CD4-positive, alpha-beta memory T cell (primary cell): ENCODE measurements at regions of chr6 and their contacts with region 1.

Region 1: DNA sequence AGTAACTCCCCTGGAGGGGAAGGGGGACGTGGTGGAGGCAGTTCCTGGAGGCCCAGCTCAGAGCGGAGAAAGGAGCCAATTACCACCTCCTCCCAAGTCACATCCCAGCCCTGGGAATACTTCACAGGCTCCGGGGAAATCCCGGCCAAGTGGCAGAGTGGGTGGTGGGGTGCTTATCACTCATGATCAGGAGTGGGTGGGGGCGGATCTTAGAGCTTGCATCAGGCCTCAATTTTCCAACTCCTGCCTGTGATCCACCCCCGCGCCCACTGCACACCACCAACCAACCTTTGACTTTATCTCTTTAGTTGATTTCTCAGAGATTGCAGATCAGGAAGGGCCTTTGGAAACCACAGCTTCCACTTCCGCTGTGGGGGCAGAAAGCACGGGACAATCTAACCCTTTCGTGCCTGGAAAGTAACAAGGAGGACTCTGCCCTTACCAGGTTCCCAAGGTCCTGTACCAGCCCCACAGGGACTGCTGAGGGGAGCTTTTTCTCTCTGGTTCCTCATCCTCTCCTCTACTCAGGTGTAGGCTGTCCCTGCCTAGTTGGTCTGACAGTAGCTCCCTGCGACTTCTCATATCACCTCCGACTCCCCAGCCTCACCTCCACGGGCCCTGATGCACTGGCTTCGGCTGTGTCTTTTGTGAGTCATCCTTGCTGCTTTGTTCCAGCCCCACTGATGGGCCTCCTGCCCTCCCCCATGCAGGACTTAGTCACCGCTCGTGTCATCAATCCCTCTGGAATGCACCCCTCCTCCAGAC is 24.9 kb upstream of the IER3 start:
- DNase-seq: peak; percentile 41 to 78 (median 49)
- H3K4me3 ChIP-seq: peak overlapping the region in 1 of 2 donors; percentile 28
- H3K4me3 Mint-ChIP-seq: peak overlapping the region; percentile 61 to 83 (median 72)
- H3K27ac ChIP-seq: peak overlapping the region; percentile 18
- H3K27ac Mint-ChIP-seq: peak overlapping the region; percentile 23 to 92 (median 88)
- H3K4me1 ChIP-seq: peaks cover 40% of the 10 kb centered on the region
- H3K4me1 Mint-ChIP-seq: peaks cover 36 to 67% (median 52%) of the 10 kb centered on the region in 4 donors
- H3K27me3 ChIP-seq: no peaks in the 10 kb centered on the region
- H3K27me3 Mint-ChIP-seq: no peaks in the 10 kb centered on the region

Region 2: GRCh38 chr6:30787954-30788353 is 18.7 kb after region 1 on chr6:
- CTCF ChIA-PET with region 1: interaction called, 3 read pairs
- POLR2A ChIA-PET with region 1: interaction called, 23 read pairs
- intact Hi-C with region 1: loop called (anchors 2 kb)
- DNase-seq: peak in 1 of 5 donors; percentile 38
- H3K4me3 ChIP-seq: no peak overlapping the region
- H3K4me3 Mint-ChIP-seq: peak overlapping the region in 6 of 8 donors; percentile 5 to 68 (median 46)
- H3K27ac ChIP-seq: no peak overlapping the region
- H3K27ac Mint-ChIP-seq: peak overlapping the region in 3 of 7 donors; percentile 9 to 59 (median 26)
- H3K4me1 ChIP-seq: peaks cover 30% of the 10 kb centered on the region
- H3K4me1 Mint-ChIP-seq: peaks cover 30 to 57% (median 46%) of the 10 kb centered on the region in 4 donors
- H3K27me3 ChIP-seq: no peaks in the 10 kb centered on the region
- H3K27me3 Mint-ChIP-seq: peaks cover 0 to 2% of the 10 kb centered on the region in 2 donors

Region 3: GRCh38 chr6:30793521-30794194 is 24.4 kb after region 1 on chr6:
- CTCF ChIA-PET with region 1: interaction called, 4 read pairs
- POLR2A ChIA-PET with region 1: interaction called, 23 read pairs
- intact Hi-C with region 1: loop called (anchors 2 kb)
- DNase-seq: peak in 4 of 5 donors; percentile 51 to 62 (median 55)
- H3K4me3 ChIP-seq: peak overlapping the region in 1 of 2 donors; percentile 11
- H3K4me3 Mint-ChIP-seq: peak overlapping the region; percentile 43 to 79 (median 74)
- H3K27ac ChIP-seq: peak overlapping the region; percentile 40
- H3K27ac Mint-ChIP-seq: peak overlapping the region; percentile 88 to 97 (median 95)
- H3K4me1 ChIP-seq: peaks cover 41% of the 10 kb centered on the region
- H3K4me1 Mint-ChIP-seq: peaks cover 37 to 70% (median 49%) of the 10 kb centered on the region in 4 donors
- H3K27me3 ChIP-seq: no peaks in the 10 kb centered on the region
- H3K27me3 Mint-ChIP-seq: peaks cover 0 to 2% of the 10 kb centered on the region in 2 donors